Activated CD8-positive, alpha-beta T cell treated with anti-CD3 and anti-CD28 coated beads, Interleukin-2, amount 10 ng/mL, durations not matched to agents 7 days and 5 days (primary cell): ENCODE measurements at regions of chr12 and their contacts with region 1.

Region 1: GRCh38 chr12:1670815-1671268 is 20.0 kb upstream of the ADIPOR2 start:
- DNase-seq: no peak
- ATAC-seq: no peak
- H3K4me3 Mint-ChIP-seq: no peak overlapping the region
- H3K27ac Mint-ChIP-seq: no peak overlapping the region
- H3K4me1 Mint-ChIP-seq: peaks cover 42% of the 10 kb centered on the region
- H3K27me3 Mint-ChIP-seq: no peaks in the 10 kb centered on the region

Region 2: DNA sequence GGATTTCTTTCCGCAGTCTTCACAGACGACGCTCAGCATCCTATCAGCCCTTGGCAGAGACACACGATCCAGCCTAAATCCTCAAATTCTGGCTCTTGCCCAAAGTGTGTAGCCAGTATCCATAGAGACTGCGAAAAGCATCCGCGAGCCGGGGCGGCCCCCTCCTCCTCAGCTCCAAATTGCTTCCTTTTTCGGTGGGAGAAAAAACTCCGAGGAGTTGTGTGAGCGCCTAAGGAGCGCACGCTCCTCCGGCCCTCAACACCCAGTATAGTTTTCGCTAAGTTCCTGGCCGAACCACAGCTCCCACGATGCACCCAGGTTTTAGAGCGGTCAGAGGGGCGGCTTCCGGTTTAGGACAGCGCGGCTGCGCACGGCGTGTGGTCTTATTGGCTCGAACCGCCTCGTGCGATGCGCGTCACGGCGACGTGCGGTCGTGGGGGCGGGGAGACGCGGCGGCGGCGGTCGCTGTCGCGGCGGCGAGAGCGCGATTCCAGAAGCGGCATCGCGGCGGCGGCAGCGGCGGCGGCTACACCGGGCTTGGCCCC is 19.8 kb after region 1 on chr12 and contains the start of gene ADIPOR2:
- CTCF ChIA-PET with region 1: interaction called, 6 read pairs
- POLR2A ChIA-PET with region 1: interaction called, 10 read pairs
- DNase-seq: peak; percentile 95
- ATAC-seq: peak; percentile 98
- H3K4me3 Mint-ChIP-seq: peak within 1 kb of the TSS; percentile 96
- H3K27ac Mint-ChIP-seq: peak within 1 kb of the TSS; percentile 98
- H3K4me1 Mint-ChIP-seq: peaks cover 42% of the 10 kb centered on the region
- H3K27me3 Mint-ChIP-seq: peaks cover 6% of the 10 kb centered on the region
- total RNA-seq, gene ADIPOR2: 64.4 to 68.3 TPM

Region 3: GRCh38 chr12:1740161-1740948 is 69.5 kb after region 1 on chr12:
- CTCF ChIA-PET with region 1: no interaction called
- POLR2A ChIA-PET with region 1: no interaction called
- DNase-seq: no peak
- ATAC-seq: no peak
- H3K4me3 Mint-ChIP-seq: no peak overlapping the region
- H3K27ac Mint-ChIP-seq: no peak overlapping the region
- H3K4me1 Mint-ChIP-seq: peaks cover 4% of the 10 kb centered on the region
- H3K27me3 Mint-ChIP-seq: no peaks in the 10 kb centered on the region